Right lobe of liver (tissue), 6 donors: ENCODE measurements at regions of chr17 and their contacts with region 1.

Region 1: GRCh38 chr17:27805520-27806146 is 5.3 kb upstream of the NOS2 start:
- DNase-seq: peak; percentile 78 to 84 (median 80)
- ATAC-seq: peak; percentile 88 to 92 (median 90)
- H3K4me3 ChIP-seq: peak overlapping the region; percentile 10 to 50 (median 28)
- H3K27ac ChIP-seq: no peak overlapping the region
- H3K4me1 ChIP-seq: peaks cover 0 to 12% (median 0%) of the 10 kb centered on the region in 4 donors
- H3K27me3 ChIP-seq: no peaks in the 10 kb centered on the region
- CTCF ChIP-seq: peak; percentile 82 to 92 (median 86)
- POLR2A ChIP-seq: no peak

Region 2: GRCh38 chr17:27868576-27868975 is 62.9 kb after region 1 on chr17:
- intact Hi-C with region 1: loop called in 1 of 2 experiments (anchors 5 kb)
- DNase-seq: no peak
- ATAC-seq: peak; percentile 48 to 85 (median 58)
- H3K4me3 ChIP-seq: no peak overlapping the region
- H3K27ac ChIP-seq: no peak overlapping the region
- H3K4me1 ChIP-seq: no peaks in the 10 kb centered on the region
- H3K27me3 ChIP-seq: no peaks in the 10 kb centered on the region
- CTCF ChIP-seq: peak; percentile 11 to 40 (median 20)
- POLR2A ChIP-seq: no peak

Region 3: DNA sequence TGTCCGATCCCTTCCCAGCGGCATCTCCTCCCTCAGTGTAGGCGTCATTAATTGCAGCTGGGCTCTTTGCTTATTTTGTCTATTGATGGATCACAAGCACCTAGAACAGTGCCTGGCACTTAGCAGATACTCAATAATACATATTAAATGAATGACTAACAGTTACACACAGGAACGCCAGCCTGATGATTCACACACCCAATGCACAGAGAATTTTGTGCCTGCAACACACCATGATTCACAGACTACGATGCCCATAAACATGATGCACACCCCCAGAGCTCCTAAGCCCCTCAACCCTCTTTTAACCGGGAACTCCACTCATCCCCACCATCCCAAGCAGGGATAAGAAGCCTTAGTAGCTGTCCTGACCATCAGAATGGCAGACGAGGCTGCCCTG is 446.8 kb after region 1 on chr17:
- intact Hi-C with region 1: loop called in 1 of 2 experiments (anchors 10 kb)
- DNase-seq: no peak
- ATAC-seq: no peak
- H3K4me3 ChIP-seq: no peak overlapping the region
- H3K27ac ChIP-seq: no peak overlapping the region
- H3K4me1 ChIP-seq: peaks cover 0 to 12% (median 5%) of the 10 kb centered on the region in 4 donors
- H3K27me3 ChIP-seq: no peaks in the 10 kb centered on the region
- CTCF ChIP-seq: no peak
- POLR2A ChIP-seq: no peak